ENCODE measurements at regions of chrX and their contacts with region 1.

Region 1: DNA sequence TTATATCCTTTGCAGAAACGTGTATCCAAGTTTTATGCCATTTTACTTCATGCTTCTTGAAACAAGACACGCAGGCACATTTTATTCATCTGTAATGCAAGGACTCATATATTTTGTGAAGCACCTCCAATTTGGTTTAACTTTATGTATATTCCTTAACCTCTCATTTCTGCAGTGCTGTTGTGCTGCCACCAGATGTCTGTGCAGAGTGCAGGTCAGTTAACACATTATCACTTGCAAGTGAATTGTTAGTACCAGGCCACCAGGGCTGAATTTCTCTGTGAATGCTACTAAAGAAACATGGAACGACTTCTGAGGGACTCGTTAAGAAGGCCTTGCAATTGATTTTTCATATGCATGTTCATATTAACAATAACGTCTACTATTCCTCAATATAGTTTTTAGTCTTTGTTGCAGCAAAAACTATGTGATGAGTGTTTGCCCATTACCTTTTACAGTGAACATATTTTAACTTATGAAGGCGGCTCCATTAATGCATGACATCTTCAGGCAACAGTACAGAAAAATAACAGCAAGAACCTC is 770.3 kb downstream of the NLGN4X start:
- DNase-seq: no peak
- ATAC-seq: no peak
- H3K4me3 ChIP-seq: no peak overlapping the region
- H3K27ac ChIP-seq: no peak overlapping the region
- H3K4me1 ChIP-seq: no peaks in the 10 kb centered on the region
- H3K27me3 ChIP-seq: no peaks in the 10 kb centered on the region
- CTCF ChIP-seq: no peak
- EP300 ChIP-seq: no peak
- POLR2A ChIP-seq: no peak
- RAD21 ChIP-seq: peak; percentile 60

Region 2: GRCh38 chrX:5876984-5877596 is 418.7 kb after region 1 on chrX:
- CTCF ChIA-PET with region 1: no interaction called
- POLR2A ChIA-PET with region 1: no interaction called
- RAD21 ChIA-PET with region 1: no interaction called
- SMC1A ChIA-PET with region 1: no interaction called
- in situ Hi-C with region 1: no loop called
- intact Hi-C with region 1: loop called (anchors 1 kb)
- DNase-seq: no peak
- ATAC-seq: peak; percentile 34; the same call in 1 of the 3 replicates
- H3K4me3 ChIP-seq: no peak overlapping the region
- H3K27ac ChIP-seq: no peak overlapping the region
- H3K4me1 ChIP-seq: no peaks in the 10 kb centered on the region
- H3K27me3 ChIP-seq: no peaks in the 10 kb centered on the region
- CTCF ChIP-seq: peak; percentile 43 to 50 (median 48); a peak in 4 of 6 replicates
- EP300 ChIP-seq: no peak
- POLR2A ChIP-seq: no peak
- RAD21 ChIP-seq: peak; percentile 90

Measured in GM12878 (cell line).